ENCODE measurements at regions of chr11 and their contacts with region 1.

Region 1: GRCh38 chr11:68297812-68298658 is 14.4 kb upstream of the LRP5 start:
- DNase-seq: peak; percentile 71
- H3K4me3 Mint-ChIP-seq: no peak overlapping the region
- H3K27ac Mint-ChIP-seq: no peak overlapping the region
- H3K4me1 Mint-ChIP-seq: peaks cover 6% of the 10 kb centered on the region
- H3K27me3 Mint-ChIP-seq: peaks cover 7% of the 10 kb centered on the region

Region 2: GRCh38 chr11:68257475-68258362 is 40.3 kb before region 1 on chr11:
- CTCF ChIA-PET with region 1: interaction called, 76 read pairs
- POLR2A ChIA-PET with region 1: no interaction called
- DNase-seq: peak; percentile 96
- H3K4me3 Mint-ChIP-seq: no peak overlapping the region
- H3K27ac Mint-ChIP-seq: peak overlapping the region; percentile 21
- H3K4me1 Mint-ChIP-seq: peaks cover 3% of the 10 kb centered on the region
- H3K27me3 Mint-ChIP-seq: no peaks in the 10 kb centered on the region

Region 3: GRCh38 chr11:68271781-68272608 is 26.0 kb before region 1 on chr11 and contains the start of gene C11orf24:
- CTCF ChIA-PET with region 1: interaction called, 40 read pairs
- POLR2A ChIA-PET with region 1: no interaction called
- DNase-seq: peak; percentile 93
- H3K4me3 Mint-ChIP-seq: peak within 1 kb of the TSS; percentile 91
- H3K27ac Mint-ChIP-seq: peak within 1 kb of the TSS; percentile 99
- H3K4me1 Mint-ChIP-seq: peaks cover 38% of the 10 kb centered on the region
- H3K27me3 Mint-ChIP-seq: no peaks in the 10 kb centered on the region
- total RNA-seq, gene C11orf24: 20.0 to 25.2 TPM

Region 4: DNA sequence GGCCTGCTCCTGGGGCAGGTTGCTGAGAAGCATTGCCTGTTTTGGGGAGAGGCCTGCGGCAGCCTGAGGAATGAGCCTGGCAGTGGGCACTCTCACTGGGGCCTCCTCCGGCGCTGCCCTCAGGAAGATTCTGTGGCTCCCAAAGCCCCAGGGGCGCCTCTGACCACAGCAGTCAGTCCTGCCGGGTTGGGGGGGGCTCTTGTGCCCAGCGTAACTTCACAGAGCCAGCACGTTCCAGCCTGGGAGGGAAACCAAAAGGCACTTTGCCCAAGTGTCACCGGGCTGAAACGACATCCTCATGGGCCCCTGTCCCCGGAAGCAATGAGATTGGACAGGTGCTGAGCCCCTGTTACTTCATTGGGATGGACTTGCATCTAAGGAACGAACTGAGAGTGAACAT is 10.0 kb after region 1 on chr11:
- CTCF ChIA-PET with region 1: interaction called, 11 read pairs
- POLR2A ChIA-PET with region 1: no interaction called
- DNase-seq: no peak
- H3K4me3 Mint-ChIP-seq: no peak overlapping the region
- H3K27ac Mint-ChIP-seq: no peak overlapping the region
- H3K4me1 Mint-ChIP-seq: peaks cover 47% of the 10 kb centered on the region
- H3K27me3 Mint-ChIP-seq: no peaks in the 10 kb centered on the region